GM12878 (cell line): ENCODE measurements at regions of chr16 and their contacts with region 1.

Region 1: DNA sequence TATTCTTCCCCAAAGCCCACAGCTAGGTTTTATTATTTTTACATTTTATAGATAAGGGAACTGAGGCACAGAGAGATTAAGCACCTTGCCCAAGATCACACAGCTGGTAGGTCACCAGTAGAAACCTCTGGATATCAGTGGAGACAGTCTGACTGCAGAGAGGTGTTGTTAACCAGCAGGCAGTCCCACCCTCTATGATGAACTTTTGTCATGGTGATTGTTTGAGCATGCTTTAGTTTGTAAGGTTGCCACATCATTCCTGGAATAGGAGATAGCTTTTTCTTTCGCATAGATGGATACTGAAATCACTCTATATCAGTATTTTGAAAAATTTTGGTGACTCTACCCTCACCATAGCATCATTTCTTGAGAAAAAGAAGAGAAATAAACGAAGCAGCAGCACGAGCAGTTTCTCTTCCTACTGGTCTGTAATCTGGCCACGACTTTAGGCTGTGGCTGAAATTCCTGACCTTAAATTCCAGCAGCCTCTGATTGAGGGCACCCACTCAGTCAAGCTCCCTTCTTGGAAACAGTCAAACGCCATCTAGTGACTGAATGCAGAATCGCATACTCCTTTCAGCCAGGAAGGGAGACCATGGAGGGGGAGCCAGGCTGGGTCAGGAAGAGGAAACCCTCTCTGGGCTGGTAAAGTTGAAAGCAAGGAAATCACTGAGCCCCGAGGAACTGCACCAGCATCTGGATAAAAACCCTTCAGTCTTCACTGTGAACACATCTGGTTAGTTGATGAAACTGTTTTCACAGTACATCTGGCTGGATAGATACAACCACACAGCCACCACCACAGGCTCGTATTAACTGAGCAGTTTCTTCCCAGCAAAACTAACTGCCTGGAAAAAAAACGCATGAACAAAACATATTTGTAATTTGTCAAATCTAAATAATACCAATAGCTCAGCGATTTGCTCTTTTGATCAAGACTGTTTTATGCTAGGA is 108.4 kb upstream of the XYLT1 start:
- DNase-seq: peak; percentile 28
- ATAC-seq: peak; percentile 93
- H3K4me3 ChIP-seq: no peak overlapping the region
- H3K27ac ChIP-seq: no peak overlapping the region
- H3K4me1 ChIP-seq: no peaks in the 10 kb centered on the region
- H3K27me3 ChIP-seq: no peaks in the 10 kb centered on the region
- CTCF ChIP-seq: peak; percentile 83 to 89 (median 84)
- EP300 ChIP-seq: no peak
- POLR2A ChIP-seq: no peak
- RAD21 ChIP-seq: peak; percentile 82

Region 2: GRCh38 chr16:17211797-17212196 is 367.4 kb before region 1 on chr16:
- CTCF ChIA-PET with region 1: interaction called, 11 read pairs
- POLR2A ChIA-PET with region 1: no interaction called
- RAD21 ChIA-PET with region 1: no interaction called
- SMC1A ChIA-PET with region 1: interaction called, 7 read pairs
- in situ Hi-C with region 1: no loop called
- intact Hi-C with region 1: no loop called
- DNase-seq: no peak
- ATAC-seq: peak; percentile 88
- H3K4me3 ChIP-seq: no peak overlapping the region
- H3K27ac ChIP-seq: no peak overlapping the region
- H3K4me1 ChIP-seq: no peaks in the 10 kb centered on the region
- H3K27me3 ChIP-seq: no peaks in the 10 kb centered on the region
- CTCF ChIP-seq: peak; percentile 57 to 62 (median 62); a peak in 5 of 6 replicates
- EP300 ChIP-seq: no peak
- POLR2A ChIP-seq: no peak
- RAD21 ChIP-seq: peak; percentile 61

Region 3: GRCh38 chr16:17377360-17378324 is 201.6 kb before region 1 on chr16:
- CTCF ChIA-PET with region 1: no interaction called
- POLR2A ChIA-PET with region 1: no interaction called
- RAD21 ChIA-PET with region 1: interaction called, 11 read pairs
- SMC1A ChIA-PET with region 1: interaction called, 3 read pairs
- in situ Hi-C with region 1: no loop called
- intact Hi-C with region 1: no loop called
- DNase-seq: peak; percentile 80
- ATAC-seq: peak; percentile 90
- H3K4me3 ChIP-seq: 0 out of 2 replicates have a peak overlapping the region, but pooled peaks have one; percentile 43
- H3K27ac ChIP-seq: peak overlapping the region; percentile 72
- H3K4me1 ChIP-seq: peaks cover 35% of the 10 kb centered on the region
- H3K27me3 ChIP-seq: no peaks in the 10 kb centered on the region
- CTCF ChIP-seq: no peak
- EP300 ChIP-seq: peak; percentile 84 to 91; a peak in 2 of 4 replicates
- POLR2A ChIP-seq: no peak
- RAD21 ChIP-seq: peak; percentile 21; the same call in 1 of the 2 replicates

Region 4: GRCh38 chr16:17476414-17477270 is 102.6 kb before region 1 on chr16:
- CTCF ChIA-PET with region 1: interaction called, 18 read pairs
- POLR2A ChIA-PET with region 1: no interaction called
- RAD21 ChIA-PET with region 1: interaction called, 6 read pairs
- SMC1A ChIA-PET with region 1: interaction called, 10 read pairs
- in situ Hi-C with region 1: no loop called
- intact Hi-C with region 1: no loop called
- DNase-seq: no peak
- ATAC-seq: peak; percentile 85
- H3K4me3 ChIP-seq: no peak overlapping the region
- H3K27ac ChIP-seq: no peak overlapping the region
- H3K4me1 ChIP-seq: peaks cover 18% of the 10 kb centered on the region
- H3K27me3 ChIP-seq: no peaks in the 10 kb centered on the region
- CTCF ChIP-seq: peak; percentile 49 to 64 (median 50); a peak in 5 of 6 replicates
- EP300 ChIP-seq: no peak
- POLR2A ChIP-seq: no peak
- RAD21 ChIP-seq: peak; percentile 70

Region 5: GRCh38 chr16:17556276-17557052 is 22.7 kb before region 1 on chr16:
- CTCF ChIA-PET with region 1: interaction called, 33 read pairs
- POLR2A ChIA-PET with region 1: no interaction called
- RAD21 ChIA-PET with region 1: interaction called, 4 read pairs
- SMC1A ChIA-PET with region 1: interaction called, 5 read pairs
- in situ Hi-C with region 1: no loop called
- intact Hi-C with region 1: no loop called
- DNase-seq: no peak
- ATAC-seq: peak; percentile 82
- H3K4me3 ChIP-seq: no peak overlapping the region
- H3K27ac ChIP-seq: no peak overlapping the region
- H3K4me1 ChIP-seq: peaks cover 7% of the 10 kb centered on the region; the same call in 1 of the 2 replicates
- H3K27me3 ChIP-seq: no peaks in the 10 kb centered on the region; a peak in 2 of 4 replicates
- CTCF ChIP-seq: peak; percentile 51 to 67 (median 62)
- EP300 ChIP-seq: no peak
- POLR2A ChIP-seq: no peak
- RAD21 ChIP-seq: peak; percentile 49

Region 6: GRCh38 chr16:17589898-17590297 is 10.7 kb after region 1 on chr16:
- CTCF ChIA-PET with region 1: interaction called, 20 read pairs
- POLR2A ChIA-PET with region 1: interaction called, 3 read pairs
- RAD21 ChIA-PET with region 1: interaction called, 4 read pairs
- SMC1A ChIA-PET with region 1: interaction called, 3 read pairs
- in situ Hi-C with region 1: no loop called
- intact Hi-C with region 1: no loop called
- DNase-seq: no peak
- ATAC-seq: no peak
- H3K4me3 ChIP-seq: no peak overlapping the region
- H3K27ac ChIP-seq: no peak overlapping the region
- H3K4me1 ChIP-seq: no peaks in the 10 kb centered on the region
- H3K27me3 ChIP-seq: no peaks in the 10 kb centered on the region; a peak in 1 of 4 replicates
- CTCF ChIP-seq: no peak
- EP300 ChIP-seq: no peak
- POLR2A ChIP-seq: no peak
- RAD21 ChIP-seq: no peak